A673 (cell line): ENCODE measurements at regions of chr1 and their contacts with region 1.

Region 1: DNA sequence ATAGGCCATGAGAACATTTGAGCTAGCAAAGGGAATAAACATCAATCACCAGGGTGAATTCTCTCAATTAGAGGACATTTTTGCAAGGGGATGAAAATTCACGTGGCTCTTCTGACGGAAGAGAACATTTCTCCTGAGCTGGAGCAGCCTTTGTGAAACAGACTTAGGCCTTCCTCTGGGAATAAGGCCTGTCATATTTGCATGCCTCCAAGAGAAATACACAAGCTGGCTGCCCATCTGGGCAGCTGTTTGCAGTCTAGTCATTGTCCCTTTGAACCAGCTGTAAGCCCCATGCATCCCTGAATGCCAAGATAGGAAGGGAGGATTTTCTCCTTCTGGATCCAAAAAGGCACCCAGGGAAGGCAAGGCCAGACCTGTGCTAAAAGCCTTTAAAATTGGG is 5.5 kb downstream of the LEMD1 start:
- DNase-seq: no peak
- H3K4me3 ChIP-seq: no peak overlapping the region
- H3K27ac ChIP-seq: no peak overlapping the region
- H3K4me1 ChIP-seq: peaks cover 13% of the 10 kb centered on the region
- H3K27me3 ChIP-seq: no peaks in the 10 kb centered on the region
- CTCF ChIP-seq: no peak

Region 2: DNA sequence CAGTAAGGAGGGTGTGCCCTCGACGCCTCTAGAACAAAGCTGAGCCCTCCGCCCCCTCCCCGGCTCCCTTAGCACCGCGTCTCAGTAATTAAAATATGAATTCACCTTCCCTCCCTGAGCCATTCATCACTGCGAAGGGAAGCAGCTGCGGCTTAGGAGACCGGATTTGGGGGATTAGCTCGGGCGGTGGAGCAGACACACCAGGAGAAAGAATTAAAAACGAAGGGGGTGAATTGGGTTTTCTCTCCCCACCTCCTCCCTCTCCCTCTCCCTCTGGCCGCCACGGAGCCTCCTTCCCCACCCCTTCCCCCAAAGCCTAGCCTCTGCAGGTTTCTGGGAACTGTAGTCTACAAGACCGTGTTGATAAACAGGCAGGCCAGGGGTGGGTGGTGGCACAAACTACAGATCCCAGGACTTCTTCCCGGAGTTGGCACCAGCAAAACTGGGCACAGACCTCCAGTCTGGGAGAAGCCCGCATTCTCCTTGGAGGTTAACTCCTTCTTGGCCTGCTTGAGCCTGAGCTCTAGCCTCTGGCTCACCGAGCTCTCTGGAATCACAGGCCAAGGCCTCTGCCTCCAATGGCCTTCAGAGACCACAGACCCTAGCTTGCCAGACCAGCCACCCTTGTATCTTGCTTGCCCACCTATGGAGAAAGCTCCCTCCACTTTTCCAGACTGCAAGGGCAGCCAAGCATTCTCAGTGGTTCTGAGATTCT is 28.8 kb after region 1 on chr1:
- CTCF ChIA-PET with region 1: interaction called, 18 read pairs
- POLR2A ChIA-PET with region 1: no interaction called
- intact Hi-C with region 1: no loop called
- DNase-seq: peak; percentile 96
- H3K4me3 ChIP-seq: peak overlapping the region; percentile 30
- H3K27ac ChIP-seq: peak overlapping the region; percentile 94
- H3K4me1 ChIP-seq: peaks cover 92% of the 10 kb centered on the region
- H3K27me3 ChIP-seq: no peaks in the 10 kb centered on the region
- CTCF ChIP-seq: no peak